Dorsolateral prefrontal cortex (tissue), 120 donors: ENCODE measurements at regions of chr20 and their contacts with region 1.

Region 1: DNA sequence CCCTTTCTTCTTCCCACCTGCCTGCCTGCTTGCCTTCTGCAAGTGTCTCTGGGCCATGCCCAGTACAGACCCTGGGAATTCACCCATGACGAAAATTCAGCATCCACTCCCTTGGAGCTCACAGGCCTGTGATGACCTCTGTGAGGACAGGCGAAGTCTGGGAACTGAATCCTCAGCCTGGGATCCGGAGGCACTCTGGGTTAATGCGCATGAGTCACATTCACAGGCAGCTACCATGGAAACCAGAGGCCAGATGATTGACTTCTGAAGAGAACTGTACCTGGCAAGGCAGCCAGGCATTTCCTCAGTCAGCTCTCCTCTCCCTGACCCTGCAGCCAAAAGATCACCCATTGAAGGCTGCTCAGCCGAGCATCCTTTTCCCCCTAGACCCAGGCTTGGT is 41.0 kb downstream of the SLC9A8 start:
- DNase-seq: peak in 1 of 10 donors; percentile 64
- H3K4me3 ChIP-seq: no peak overlapping the region
- H3K27ac ChIP-seq: peak overlapping the region in 27 of 59 donors; percentile 3 to 92 (median 61)
- H3K27me3 ChIP-seq: no peaks in the 10 kb centered on the region
- CTCF ChIP-seq: no peak

Region 2: GRCh38 chr20:49915378-49916145 is 61.9 kb after region 1 on chr20 and contains the start of gene SPATA2:
- intact Hi-C with region 1: loop called in 1 of 2 experiments (anchors 1 kb)
- DNase-seq: peak; percentile 92 to 97 (median 96)
- H3K4me3 ChIP-seq: peak within 1 kb of the TSS; percentile 81 to 100 (median 98)
- H3K27ac ChIP-seq: peak within 1 kb of the TSS; percentile 97 to 100 (median 100)
- H3K27me3 ChIP-seq: no peaks in the 10 kb centered on the region
- CTCF ChIP-seq: peak in 14 of 56 donors; percentile 7 to 35 (median 24)
- total RNA-seq, gene SPATA2: 23.0 to 60.6 (median 41.6) TPM